Activated CD4-positive, alpha-beta T cell treated with anti-CD3 and anti-CD28 coated beads, Interleukin-2, amount 10 ng/mL, durations not matched to agents 24 days and 14 days (primary cell): ENCODE measurements at regions of chr11 and their contacts with region 1.

Region 1: GRCh38 chr11:14643697-14644225 is at the start of gene PDE3B:
- DNase-seq: peak; percentile 93
- H3K4me3 Mint-ChIP-seq: peak within 1 kb of the TSS; percentile 83
- H3K27ac Mint-ChIP-seq: peak within 1 kb of the TSS; percentile 94
- H3K4me1 Mint-ChIP-seq: peaks cover 31% of the 10 kb centered on the region
- H3K27me3 Mint-ChIP-seq: no peaks in the 10 kb centered on the region
- total RNA-seq, gene PDE3B: 49.3 and 52.8 TPM in 2 replicates

Region 2: GRCh38 chr11:14336507-14337503 is 307.0 kb before region 1 on chr11:
- intact Hi-C with region 1: loop called (anchors 10 kb)
- DNase-seq: peak; percentile 65
- H3K4me3 Mint-ChIP-seq: peak overlapping the region; percentile 5
- H3K27ac Mint-ChIP-seq: peak overlapping the region; percentile 77
- H3K4me1 Mint-ChIP-seq: peaks cover 51% of the 10 kb centered on the region
- H3K27me3 Mint-ChIP-seq: no peaks in the 10 kb centered on the region

Region 3: GRCh38 chr11:14519917-14520746 is 123.6 kb before region 1 on chr11 and contains the start of gene PSMA1:
- intact Hi-C with region 1: loop called (anchors 1 kb)
- DNase-seq: peak; percentile 98
- H3K4me3 Mint-ChIP-seq: peak within 1 kb of the TSS; percentile 96
- H3K27ac Mint-ChIP-seq: peak within 1 kb of the TSS; percentile 98
- H3K4me1 Mint-ChIP-seq: peaks cover 22% of the 10 kb centered on the region
- H3K27me3 Mint-ChIP-seq: no peaks in the 10 kb centered on the region
- total RNA-seq, gene PSMA1: 334 and 344 TPM in 2 replicates

Region 4: GRCh38 chr11:14544611-14545010 is 99.2 kb before region 1 on chr11:
- intact Hi-C with region 1: loop called (anchors 1 kb)
- DNase-seq: peak; percentile 65
- H3K4me3 Mint-ChIP-seq: peak overlapping the region; percentile 61
- H3K27ac Mint-ChIP-seq: peak overlapping the region; percentile 94
- H3K4me1 Mint-ChIP-seq: peaks cover 49% of the 10 kb centered on the region
- H3K27me3 Mint-ChIP-seq: no peaks in the 10 kb centered on the region

Region 5: DNA sequence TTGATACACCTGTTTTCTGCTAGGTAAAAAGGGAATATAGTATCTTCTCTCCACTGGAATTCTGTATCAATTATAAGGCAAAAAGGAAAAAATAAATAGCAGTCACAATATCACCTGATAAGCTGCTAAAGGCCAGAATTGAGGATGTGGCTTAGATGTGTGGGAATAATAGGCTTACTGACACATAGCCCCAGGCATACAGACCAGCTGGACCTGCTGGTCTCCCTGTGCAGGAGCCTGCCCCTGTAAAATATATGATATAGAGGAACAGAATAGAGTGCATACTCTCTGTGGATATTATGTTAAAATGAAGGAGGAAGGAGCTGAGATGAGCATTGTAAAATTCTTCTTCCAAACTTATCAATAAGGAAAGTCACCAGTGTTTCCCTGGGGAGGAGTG is 37.0 kb before region 1 on chr11:
- intact Hi-C with region 1: no loop called
- DNase-seq: no peak
- H3K4me3 Mint-ChIP-seq: no peak overlapping the region
- H3K27ac Mint-ChIP-seq: no peak overlapping the region
- H3K4me1 Mint-ChIP-seq: peaks cover 13% of the 10 kb centered on the region
- H3K27me3 Mint-ChIP-seq: no peaks in the 10 kb centered on the region

Region 6: GRCh38 chr11:14619603-14620531 is 23.9 kb before region 1 on chr11:
- intact Hi-C with region 1: no loop called
- DNase-seq: peak; percentile 40
- H3K4me3 Mint-ChIP-seq: no peak overlapping the region
- H3K27ac Mint-ChIP-seq: no peak overlapping the region
- H3K4me1 Mint-ChIP-seq: peaks cover 30% of the 10 kb centered on the region
- H3K27me3 Mint-ChIP-seq: no peaks in the 10 kb centered on the region

Region 7: GRCh38 chr11:14713496-14714244 is 69.9 kb after region 1 on chr11:
- intact Hi-C with region 1: loop called (anchors 5 kb)
- DNase-seq: peak; percentile 72
- H3K4me3 Mint-ChIP-seq: peak overlapping the region; percentile 10
- H3K27ac Mint-ChIP-seq: peak overlapping the region; percentile 76
- H3K4me1 Mint-ChIP-seq: peaks cover 31% of the 10 kb centered on the region
- H3K27me3 Mint-ChIP-seq: no peaks in the 10 kb centered on the region